Tibial artery (tissue), 4 donors: ENCODE measurements at regions of chr9 and their contacts with region 1.

Region 1: GRCh38 chr9:86948074-86948929 is 996 bp upstream of the GAS1 start:
- DNase-seq: peak; percentile 78 to 89
- H3K4me3 ChIP-seq: peak overlapping the region; percentile 66 to 83
- H3K27ac ChIP-seq: peak overlapping the region; percentile 79 to 90
- H3K4me1 ChIP-seq: peaks cover 0 to 32% (median 4%) of the 10 kb centered on the region in 4 donors
- H3K27me3 ChIP-seq: no peaks in the 10 kb centered on the region
- CTCF ChIP-seq: peak; percentile 90 to 96

Region 2: GRCh38 chr9:87109851-87110250 is 161.5 kb after region 1 on chr9:
- intact Hi-C with region 1: loop called (anchors 5 kb)
- DNase-seq: no peak
- H3K4me3 ChIP-seq: no peak overlapping the region
- H3K27ac ChIP-seq: peak overlapping the region in 1 of 2 donors; percentile 2
- H3K4me1 ChIP-seq: peaks cover 0 to 32% (median 8%) of the 10 kb centered on the region in 4 donors
- H3K27me3 ChIP-seq: no peaks in the 10 kb centered on the region
- CTCF ChIP-seq: no peak